Breast epithelium (tissue), 4 donors: ENCODE measurements at regions of chr10 and their contacts with region 1.

Region 1: DNA sequence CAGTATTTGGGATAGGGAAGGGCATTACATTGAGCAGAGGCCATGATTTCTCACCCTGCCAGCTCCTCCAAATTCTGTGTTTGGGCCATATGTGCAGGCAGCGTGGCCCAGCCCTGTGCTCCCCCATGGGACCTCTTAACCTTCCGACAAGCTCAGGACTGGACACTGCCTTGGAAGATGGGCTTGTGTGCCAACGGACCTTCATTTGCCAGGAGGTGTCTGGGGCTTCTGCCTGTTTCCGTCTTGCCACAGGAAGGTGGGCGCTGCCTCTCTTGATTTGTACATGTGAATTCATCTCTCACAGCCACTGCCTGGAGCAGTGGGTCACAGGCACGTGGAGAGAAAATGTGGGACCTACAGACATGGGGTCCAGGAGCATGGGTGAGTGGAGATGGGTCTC is 272.6 kb downstream of the CCSER2 start:
- DNase-seq: peak in 1 of 2 donors; percentile 25
- H3K4me3 ChIP-seq: no peak overlapping the region
- H3K27ac ChIP-seq: no peak overlapping the region
- H3K4me1 ChIP-seq: no peaks in the 10 kb centered on the region
- H3K27me3 ChIP-seq: no peaks in the 10 kb centered on the region
- CTCF ChIP-seq: no peak
- POLR2A ChIP-seq: no peak

Region 2: DNA sequence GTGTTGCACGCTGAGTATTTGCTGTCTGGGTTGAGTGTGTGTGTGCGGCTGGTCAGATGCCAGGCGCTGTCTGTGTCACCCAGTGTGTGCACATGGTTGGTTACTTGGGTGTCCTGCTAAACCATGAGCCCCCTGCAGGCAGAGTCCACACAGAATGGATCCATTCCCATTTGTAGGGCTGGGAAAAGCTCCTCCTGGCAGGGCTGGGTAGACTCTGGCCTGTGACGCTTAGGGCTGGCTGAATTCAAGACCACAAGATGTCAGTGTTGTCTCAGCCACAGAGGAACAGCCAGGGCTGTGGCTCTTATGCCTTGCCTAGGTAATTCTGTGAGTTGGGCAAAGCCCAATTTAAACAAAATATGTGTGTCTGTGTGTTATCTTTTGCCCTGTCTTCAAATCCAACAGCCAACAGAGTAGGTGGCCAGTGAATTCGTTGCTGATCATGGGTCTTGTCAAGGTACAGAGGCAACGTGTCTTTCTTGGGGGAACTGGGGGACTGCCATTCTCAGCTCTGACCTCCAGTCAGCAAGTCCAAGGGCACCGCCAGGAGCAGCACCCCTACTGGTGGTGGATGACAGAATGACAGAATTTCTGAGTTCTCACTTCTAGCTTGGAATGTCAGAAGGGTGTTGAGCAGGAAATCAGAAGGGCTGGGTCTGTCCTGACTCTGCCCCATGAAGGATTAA is 12.5 kb after region 1 on chr10:
- intact Hi-C with region 1: loop called (anchors 1 kb)
- DNase-seq: no peak
- H3K4me3 ChIP-seq: no peak overlapping the region
- H3K27ac ChIP-seq: no peak overlapping the region
- H3K4me1 ChIP-seq: no peaks in the 10 kb centered on the region
- H3K27me3 ChIP-seq: no peaks in the 10 kb centered on the region
- CTCF ChIP-seq: peak in 2 of 3 donors; percentile 15 to 29
- POLR2A ChIP-seq: no peak